ENCODE measurements at regions of chr9 and their contacts with region 1.

Region 1: DNA sequence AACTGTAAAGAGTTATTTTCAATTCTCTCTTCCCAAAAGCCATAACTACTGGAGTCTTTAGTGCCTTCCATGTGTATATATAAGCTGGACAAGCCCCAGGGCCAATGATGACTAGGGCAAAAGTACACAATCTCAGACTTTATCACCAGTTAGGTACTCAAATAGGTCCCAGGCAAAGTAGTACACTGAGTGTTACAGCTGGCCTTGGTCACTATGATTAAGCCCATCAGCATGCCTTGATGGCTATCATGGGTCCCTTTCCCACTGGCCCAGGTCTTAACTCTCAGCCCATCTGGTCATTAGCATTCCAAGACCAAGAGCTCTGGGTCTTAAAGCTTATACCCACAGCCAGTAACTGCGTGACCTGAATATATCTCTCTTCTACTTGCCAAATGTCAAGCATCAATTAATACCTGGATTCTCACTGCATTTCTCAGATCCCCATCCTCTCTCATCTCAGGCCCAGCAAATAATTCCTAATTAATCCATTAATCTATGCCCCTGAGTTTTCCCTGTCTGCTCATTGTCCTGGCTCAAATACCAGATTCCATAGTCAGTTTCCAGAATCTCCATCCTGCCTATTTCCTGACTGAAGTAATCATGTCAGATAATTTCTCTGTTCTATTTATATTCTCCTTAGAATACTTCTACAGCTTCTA is 62.3 kb downstream of the NR6A1 start:
- DNase-seq: peak; percentile 14
- H3K4me3 ChIP-seq: no peak overlapping the region
- H3K27ac ChIP-seq: no peak overlapping the region
- H3K4me1 ChIP-seq: peaks cover 9% of the 10 kb centered on the region
- H3K27me3 ChIP-seq: no peaks in the 10 kb centered on the region
- CTCF ChIP-seq: no peak
- POLR2A ChIP-seq: no peak

Region 2: DNA sequence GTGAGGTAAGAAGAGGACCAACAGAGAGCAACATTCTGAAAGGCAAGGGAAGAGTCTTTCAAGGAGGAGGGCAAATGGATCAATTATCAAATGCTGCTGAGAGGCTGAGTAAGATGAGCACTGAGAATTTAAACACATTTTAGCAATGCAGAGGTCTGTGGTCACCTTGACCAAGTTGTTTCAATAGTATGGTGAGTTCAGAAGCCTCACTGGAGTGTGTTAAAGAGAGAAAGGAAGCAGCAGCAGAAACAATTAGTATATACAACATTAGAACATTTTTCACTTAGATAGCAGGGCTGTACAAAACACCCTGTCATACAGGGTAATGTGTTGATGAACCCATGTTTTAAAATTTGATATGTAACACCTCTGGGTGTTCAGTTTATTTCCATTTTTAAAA is 69.1 kb before region 1 on chr9:
- CTCF ChIA-PET with region 1: interaction called, 12 read pairs
- POLR2A ChIA-PET with region 1: no interaction called
- dilution Hi-C with region 1: no loop called
- intact Hi-C with region 1: no loop called
- DNase-seq: no peak
- H3K4me3 ChIP-seq: no peak overlapping the region
- H3K27ac ChIP-seq: no peak overlapping the region
- H3K4me1 ChIP-seq: no peaks in the 10 kb centered on the region
- H3K27me3 ChIP-seq: peaks cover 7 to 15% of the 10 kb centered on the region in 2 experiments
- CTCF ChIP-seq: no peak
- POLR2A ChIP-seq: no peak

Region 3: GRCh38 chr9:124680714-124681390 is 27.9 kb before region 1 on chr9:
- CTCF ChIA-PET with region 1: interaction called, 7 read pairs
- POLR2A ChIA-PET with region 1: no interaction called
- dilution Hi-C with region 1: no loop called
- intact Hi-C with region 1: loop called (anchors 2 kb)
- DNase-seq: no peak
- H3K4me3 ChIP-seq: no peak overlapping the region
- H3K27ac ChIP-seq: no peak overlapping the region
- H3K4me1 ChIP-seq: no peaks in the 10 kb centered on the region
- H3K27me3 ChIP-seq: no peaks in the 10 kb centered on the region
- CTCF ChIP-seq: no peak
- POLR2A ChIP-seq: no peak

Region 4: DNA sequence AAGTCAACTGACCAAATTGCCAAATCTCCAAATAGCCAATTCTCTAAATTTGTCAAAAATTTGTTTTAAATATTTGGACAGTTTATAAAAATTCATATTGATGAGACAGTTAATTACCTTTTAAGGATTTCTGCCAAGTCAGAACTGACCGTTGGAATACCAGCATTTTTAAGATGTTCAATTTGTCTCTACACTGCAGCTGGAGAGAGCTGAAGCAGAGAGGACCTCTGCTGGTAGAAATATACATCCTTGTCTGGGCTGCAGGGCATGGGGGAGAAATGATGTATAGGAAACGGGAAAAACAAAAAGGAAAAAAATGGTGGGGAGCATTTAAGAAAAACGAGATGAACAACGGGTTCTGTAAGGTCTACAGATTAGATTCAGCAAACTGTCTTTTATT is 45.5 kb after region 1 on chr9:
- CTCF ChIA-PET with region 1: interaction called, 14 read pairs
- POLR2A ChIA-PET with region 1: no interaction called
- dilution Hi-C with region 1: no loop called
- intact Hi-C with region 1: loop called (anchors 1 kb)
- DNase-seq: peak; percentile 33
- H3K4me3 ChIP-seq: no peak overlapping the region
- H3K27ac ChIP-seq: no peak overlapping the region
- H3K4me1 ChIP-seq: no peaks in the 10 kb centered on the region
- H3K27me3 ChIP-seq: peaks cover 30 to 52% of the 10 kb centered on the region in 2 experiments
- CTCF ChIP-seq: peak in 1 of 2 donors; percentile 34
- POLR2A ChIP-seq: no peak

Region 5: GRCh38 chr9:124784509-124784908 is 75.7 kb after region 1 on chr9:
- CTCF ChIA-PET with region 1: no interaction called
- POLR2A ChIA-PET with region 1: no interaction called
- dilution Hi-C with region 1: no loop called
- intact Hi-C with region 1: no loop called
- DNase-seq: no peak
- H3K4me3 ChIP-seq: no peak overlapping the region
- H3K27ac ChIP-seq: no peak overlapping the region
- H3K4me1 ChIP-seq: peaks cover 4% of the 10 kb centered on the region
- H3K27me3 ChIP-seq: no peaks in the 10 kb centered on the region
- CTCF ChIP-seq: no peak
- POLR2A ChIP-seq: no peak

Region 6: GRCh38 chr9:125176636-125177035 is 467.9 kb after region 1 on chr9:
- CTCF ChIA-PET with region 1: no interaction called
- POLR2A ChIA-PET with region 1: no interaction called
- dilution Hi-C with region 1: no loop called
- intact Hi-C with region 1: no loop called
- DNase-seq: no peak
- H3K4me3 ChIP-seq: no peak overlapping the region
- H3K27ac ChIP-seq: no peak overlapping the region
- H3K4me1 ChIP-seq: peaks cover 10% of the 10 kb centered on the region
- H3K27me3 ChIP-seq: no peaks in the 10 kb centered on the region
- CTCF ChIP-seq: no peak
- POLR2A ChIP-seq: no peak